ENCODE measurements at regions of chr6 and their contacts with region 1.

Region 1: GRCh38 chr6:154805288-154805911 is 72.2 kb downstream of the SCAF8 start:
- DNase-seq: peak; percentile 31
- ATAC-seq: no peak
- H3K4me3 ChIP-seq: no peak overlapping the region
- H3K27ac ChIP-seq: no peak overlapping the region
- H3K4me1 ChIP-seq: no peaks in the 10 kb centered on the region
- H3K27me3 ChIP-seq: no peaks in the 10 kb centered on the region
- CTCF ChIP-seq: peak in 2 of 3 experiments; percentile 52 to 68; a peak in 4 of 6 replicates
- POLR2A ChIP-seq: no peak
- RAD21 ChIP-seq: peak; percentile 78

Region 2: DNA sequence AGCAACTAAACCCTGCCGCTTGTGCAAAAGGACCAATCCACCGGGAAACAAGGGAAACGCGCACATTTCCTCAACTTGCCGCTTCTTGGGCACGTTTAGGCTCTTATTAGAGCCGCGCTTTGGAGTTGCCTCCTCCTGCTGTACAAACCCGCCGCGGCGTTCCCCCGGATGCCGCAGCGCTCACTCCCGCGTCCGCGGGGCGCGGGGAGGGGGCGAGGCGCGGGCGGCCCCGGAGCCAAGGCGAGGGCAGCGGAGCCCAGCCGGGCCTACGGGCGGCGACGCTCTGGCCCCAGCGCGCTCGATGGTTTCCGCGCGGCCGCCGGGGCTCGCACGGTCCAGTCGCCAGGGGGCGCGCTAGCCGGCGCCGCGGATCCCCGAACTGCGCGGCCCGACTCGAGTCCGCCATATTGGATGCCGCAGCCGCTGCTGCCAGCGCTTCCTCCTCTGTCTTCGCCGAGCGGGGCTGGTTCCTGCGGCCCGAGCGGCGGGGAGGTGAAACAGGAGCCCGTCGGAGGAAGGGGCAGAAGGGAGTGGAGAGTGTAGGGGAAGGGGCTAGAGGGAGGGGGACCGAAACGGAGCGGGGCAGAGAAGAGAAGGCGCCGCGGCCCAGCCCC is 72.3 kb before region 1 on chr6 and contains the start of gene SCAF8:
- CTCF ChIA-PET with region 1: interaction called, 4 read pairs
- POLR2A ChIA-PET with region 1: interaction called, 6 read pairs
- RAD21 ChIA-PET with region 1: no interaction called
- intact Hi-C with region 1: loop called (anchors 1 kb)
- DNase-seq: peak; percentile 53
- ATAC-seq: peak; percentile 76
- H3K4me3 ChIP-seq: peak within 1 kb of the TSS; percentile 69 to 71
- H3K27ac ChIP-seq: peak within 1 kb of the TSS; percentile 98
- H3K4me1 ChIP-seq: peaks cover 3 to 19% of the 10 kb centered on the region in 2 experiments; a peak in 3 of 4 replicates
- H3K27me3 ChIP-seq: no peaks in the 10 kb centered on the region
- CTCF ChIP-seq: peak; percentile 32 to 76 (median 62); a peak in 5 of 6 replicates
- POLR2A ChIP-seq: peak; percentile 46
- RAD21 ChIP-seq: peak; percentile 45; the same call in 1 of the 2 replicates
- total RNA-seq, gene SCAF8: 34.6 TPM

Region 3: GRCh38 chr6:155154158-155154830 is 348.9 kb after region 1 on chr6:
- CTCF ChIA-PET with region 1: no interaction called
- POLR2A ChIA-PET with region 1: no interaction called
- RAD21 ChIA-PET with region 1: no interaction called
- intact Hi-C with region 1: no loop called
- DNase-seq: no peak
- ATAC-seq: peak; percentile 54; the same call in 1 of the 2 replicates
- H3K4me3 ChIP-seq: peak overlapping the region in 1 of 2 experiments; percentile 1; a peak in 1 of 4 replicates
- H3K27ac ChIP-seq: peak overlapping the region; percentile 12; the same call in 1 of the 2 replicates
- H3K4me1 ChIP-seq: peaks cover 45 to 66% of the 10 kb centered on the region in 2 experiments
- H3K27me3 ChIP-seq: no peaks in the 10 kb centered on the region
- CTCF ChIP-seq: no peak
- POLR2A ChIP-seq: no peak
- RAD21 ChIP-seq: no peak

Measured in HCT116 (cell line).